AG04449 (cell line): ENCODE measurements at regions of chr17 and their contacts with region 1.

Region 1: DNA sequence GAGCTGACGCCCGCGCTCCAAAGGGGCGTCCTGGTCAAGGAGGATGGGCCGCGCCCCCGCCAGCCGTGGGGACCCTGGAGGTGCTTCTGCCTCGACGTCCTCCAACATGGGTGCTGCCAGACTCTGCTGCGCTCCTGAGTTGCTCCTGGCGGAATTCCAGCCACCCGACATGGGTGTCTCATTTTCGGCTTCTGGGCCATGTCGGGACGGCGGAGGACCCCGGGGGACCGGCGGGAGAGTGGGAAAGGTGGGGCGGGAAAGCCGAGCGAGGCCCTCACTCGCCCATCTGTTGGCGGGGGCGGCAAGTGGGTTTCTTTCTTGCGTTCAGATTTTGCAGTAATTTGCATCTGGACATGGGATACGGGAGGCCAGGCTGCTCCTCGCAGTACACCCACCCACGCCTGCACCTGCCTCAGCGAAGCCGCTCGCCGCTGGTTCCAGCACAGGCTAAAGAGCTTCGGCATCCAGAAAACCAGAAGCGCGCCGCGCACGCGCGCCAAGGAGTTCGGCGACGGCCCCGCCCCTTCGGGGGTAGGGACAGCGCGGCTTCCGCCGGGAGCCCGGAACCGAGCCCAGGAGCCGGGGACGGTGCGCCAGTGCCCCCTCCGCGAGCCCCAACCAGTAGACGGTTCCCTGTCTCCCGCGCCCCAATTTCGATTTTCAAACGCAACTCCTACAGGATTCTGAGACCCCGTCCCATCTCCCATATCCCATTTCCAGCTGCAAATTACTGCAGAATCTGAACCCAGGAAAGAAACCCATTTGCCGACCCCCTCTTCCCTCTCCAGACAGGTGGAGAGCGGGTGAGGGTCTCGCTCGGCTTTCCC is at the start of gene ARMC7:
- DNase-seq: no peak
- H3K4me3 ChIP-seq: peak within 1 kb of the TSS; percentile 79
- CTCF ChIP-seq: no peak

Region 2: DNA sequence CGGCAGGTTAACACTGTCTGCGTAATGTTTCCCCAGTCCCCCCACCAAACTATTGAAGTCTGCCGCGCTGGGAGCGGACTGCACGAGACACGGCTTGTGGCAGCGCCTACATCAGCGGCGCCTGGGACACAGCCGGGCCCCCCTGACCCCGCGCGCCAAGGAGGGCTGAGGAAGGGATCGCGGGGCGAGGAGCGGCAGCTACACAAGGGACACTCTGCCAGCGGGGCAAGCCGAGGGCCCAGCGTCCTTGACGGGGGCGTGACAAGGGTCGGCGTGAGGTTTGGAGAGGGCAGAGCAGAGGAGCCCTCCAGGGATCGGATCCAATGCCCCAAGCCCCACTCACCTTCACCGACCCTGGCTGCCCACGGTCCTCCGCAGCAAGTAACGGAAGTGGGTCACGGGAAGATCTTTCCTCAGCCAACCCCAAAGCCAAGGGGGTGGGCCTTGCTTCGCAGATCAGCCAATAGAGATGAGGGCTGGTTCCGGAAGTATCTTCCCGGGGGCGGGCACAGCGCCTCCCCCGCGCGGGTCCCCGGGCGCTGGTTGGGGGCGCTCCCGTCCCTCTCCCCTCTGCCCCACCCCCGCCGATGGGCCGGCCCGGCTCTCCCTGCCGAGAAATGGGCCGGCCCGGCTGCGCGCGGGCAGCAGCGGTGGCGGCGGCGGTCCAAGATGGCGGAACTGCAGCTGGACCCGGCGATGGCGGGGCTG is 62.9 kb before region 1 on chr17 and contains the starts of genes ATP5PD and KCTD2:
- CTCF ChIA-PET with region 1: interaction called, 15 read pairs
- POLR2A ChIA-PET with region 1: no interaction called
- DNase-seq: peak; percentile 77
- H3K4me3 ChIP-seq: peak within 1 kb of the TSS; percentile 99
- CTCF ChIP-seq: no peak

Region 3: DNA sequence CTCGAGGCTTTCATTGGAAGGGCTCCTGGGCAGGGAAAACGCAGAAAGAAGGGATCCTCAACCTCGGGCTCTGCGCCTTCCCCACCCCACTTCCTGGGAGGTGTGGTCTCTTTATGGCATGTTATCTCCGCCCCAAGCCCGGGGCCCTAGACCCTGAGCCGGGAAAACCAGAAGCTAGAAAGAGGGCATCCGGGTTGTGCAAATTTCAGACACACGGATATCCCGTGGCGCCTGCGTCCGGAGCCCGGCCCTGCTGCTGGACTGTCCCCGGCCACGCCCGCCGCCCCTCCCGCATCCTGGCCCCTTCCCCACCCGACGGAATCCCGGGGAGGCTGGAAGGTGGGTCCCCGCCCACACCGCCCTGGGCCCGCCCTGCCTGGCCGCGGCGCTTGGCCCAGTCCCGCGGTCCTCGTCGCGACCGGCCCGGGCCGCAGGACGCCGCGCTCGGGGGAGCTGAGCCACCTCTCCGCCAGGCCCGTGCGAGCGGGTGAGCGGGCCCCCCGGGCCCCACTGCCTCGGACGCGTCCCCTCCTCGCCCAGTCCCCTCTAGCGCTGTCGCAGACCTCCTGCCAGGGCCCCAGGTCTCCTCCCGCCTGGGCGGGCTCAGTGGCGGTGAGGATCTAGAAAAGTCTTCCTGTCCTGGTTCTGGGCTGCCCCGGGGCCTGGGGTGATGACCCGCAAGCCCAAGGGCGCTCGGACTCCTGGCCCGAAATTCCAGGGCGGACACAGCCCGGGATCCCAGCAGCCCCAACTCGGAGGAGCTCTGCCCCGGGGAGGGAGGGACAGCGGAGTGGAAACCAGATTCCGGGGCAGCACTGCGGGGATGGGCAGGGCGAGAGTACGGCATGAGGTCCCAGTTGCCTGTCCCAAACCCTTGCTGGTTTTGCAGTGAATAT is 21.8 kb before region 1 on chr17 and contains the start of gene SLC16A5:
- CTCF ChIA-PET with region 1: interaction called, 43 read pairs
- POLR2A ChIA-PET with region 1: interaction called, 12 read pairs
- DNase-seq: no peak
- H3K4me3 ChIP-seq: peak within 1 kb of the TSS; percentile 69
- CTCF ChIP-seq: no peak

Region 4: DNA sequence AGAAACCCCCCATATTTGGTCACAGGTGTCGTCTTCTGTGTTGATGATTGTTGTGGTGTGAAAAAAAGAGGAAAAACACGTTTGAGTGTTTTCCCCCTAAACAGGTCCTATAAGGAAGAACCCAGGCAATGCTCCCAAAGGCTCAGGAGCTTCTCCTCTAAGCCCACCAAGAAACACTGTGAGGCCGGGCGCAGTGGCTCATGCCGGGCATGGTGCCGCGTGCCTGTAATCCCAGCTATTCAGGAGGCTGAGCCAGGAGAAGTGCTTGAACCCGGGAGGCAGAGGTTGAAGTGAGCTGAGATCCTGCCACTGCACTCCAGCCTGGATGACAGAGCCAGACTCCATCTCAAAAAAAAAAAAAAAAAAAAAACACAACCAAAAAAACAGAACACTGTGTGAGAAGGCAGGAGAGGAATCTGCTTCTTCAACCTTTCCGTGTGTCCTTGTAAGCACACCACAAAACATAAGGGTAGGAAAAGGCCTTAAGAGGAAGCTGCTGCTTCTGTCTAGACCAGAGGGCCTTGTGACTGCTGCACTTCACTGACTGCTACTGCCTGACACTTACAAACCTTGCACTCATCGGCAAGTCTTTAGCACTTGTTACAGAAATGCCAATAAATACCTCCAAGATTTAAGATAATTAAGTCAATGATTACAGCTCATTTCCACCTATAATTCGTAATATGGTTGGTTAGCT is 35.3 kb after region 1 on chr17:
- CTCF ChIA-PET with region 1: interaction called, 18 read pairs
- POLR2A ChIA-PET with region 1: no interaction called
- DNase-seq: no peak
- H3K4me3 ChIP-seq: no peak overlapping the region
- CTCF ChIP-seq: no peak

Region 5: DNA sequence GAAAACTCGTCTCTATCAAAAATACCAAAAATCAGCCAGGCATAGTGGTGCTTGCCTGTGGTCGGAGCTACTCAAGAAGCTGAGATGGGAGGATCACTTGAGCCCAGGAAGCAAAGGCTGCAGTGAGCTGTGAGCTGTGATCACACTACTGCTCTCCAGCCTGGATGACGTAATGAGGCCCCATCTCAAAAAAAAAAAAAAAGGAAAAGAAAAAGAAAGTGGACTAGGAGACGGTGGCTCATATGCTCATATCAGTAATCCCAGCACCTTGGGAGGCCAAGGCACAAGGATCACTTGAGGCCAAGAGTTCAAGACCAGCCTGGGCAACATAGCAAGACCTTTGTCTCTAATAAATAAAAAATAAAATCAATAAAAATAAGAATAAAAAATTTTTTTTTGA is 82.0 kb after region 1 on chr17:
- CTCF ChIA-PET with region 1: interaction called, 16 read pairs
- POLR2A ChIA-PET with region 1: no interaction called
- DNase-seq: no peak
- H3K4me3 ChIP-seq: no peak overlapping the region
- CTCF ChIP-seq: no peak

Region 6: GRCh38 chr17:75271233-75271954 is 161.8 kb after region 1 on chr17:
- CTCF ChIA-PET with region 1: interaction called, 20 read pairs
- POLR2A ChIA-PET with region 1: no interaction called
- DNase-seq: no peak
- H3K4me3 ChIP-seq: peak overlapping the region; percentile 71
- CTCF ChIP-seq: peak; percentile 68